Transverse colon (tissue), 4 donors: ENCODE measurements at regions of chr12 and their contacts with region 1.

Region 1: DNA sequence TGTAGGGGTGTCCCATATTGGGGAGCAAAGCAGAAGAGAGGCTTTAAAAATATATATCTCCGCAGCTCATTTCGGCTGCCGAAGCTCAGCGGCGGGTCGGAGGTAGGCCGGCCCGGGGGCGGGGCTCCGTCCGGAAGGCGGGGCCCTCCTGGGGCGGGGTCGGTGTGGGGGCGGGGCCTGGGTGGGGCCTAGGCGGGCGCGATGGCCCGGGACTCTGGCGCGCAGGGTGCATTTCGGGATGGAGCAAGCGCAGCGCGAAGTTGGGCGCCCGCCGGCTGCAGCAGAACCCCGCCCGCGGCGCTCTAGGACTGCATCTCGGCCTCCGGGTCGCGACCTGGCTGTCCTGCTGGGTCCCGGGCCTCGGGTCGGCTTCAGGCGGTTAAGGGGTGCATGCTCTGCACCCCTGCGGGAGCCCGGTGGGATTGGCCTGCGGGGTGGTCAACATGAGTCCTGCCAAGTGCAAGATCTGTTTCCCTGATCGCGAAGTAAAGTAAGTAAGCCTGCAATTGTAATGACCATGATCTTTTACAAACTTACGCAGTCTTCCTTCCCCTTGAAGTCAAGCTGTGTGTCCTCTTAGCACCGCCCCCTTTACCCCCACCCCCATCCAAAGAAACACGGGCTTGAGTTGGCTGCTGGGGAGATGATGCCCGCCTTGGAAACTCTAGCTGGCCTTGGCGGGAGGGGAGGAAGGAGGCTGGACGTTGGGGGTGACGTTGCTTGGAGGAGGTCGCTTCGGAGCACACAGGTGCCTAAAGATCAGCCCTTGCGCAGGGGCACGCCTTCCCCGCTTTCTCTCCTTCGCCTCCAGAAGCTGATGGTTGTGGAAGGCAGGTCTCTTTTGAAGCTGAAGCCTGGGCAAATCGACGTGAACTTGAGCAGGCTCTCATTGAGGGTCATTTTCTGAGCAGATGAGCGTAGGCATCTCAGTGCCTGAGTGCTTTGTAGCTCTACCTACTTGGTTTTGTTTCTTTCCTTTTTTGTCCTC is 38.4 kb downstream of the ACACB start:
- DNase-seq: peak; percentile 87
- H3K4me3 ChIP-seq: peak overlapping the region; percentile 43 to 74 (median 61)
- H3K27ac ChIP-seq: peak overlapping the region; percentile 78 to 97 (median 94)
- H3K4me1 ChIP-seq: peaks cover 13 to 44% (median 20%) of the 10 kb centered on the region in 4 donors
- H3K27me3 ChIP-seq: no peaks in the 10 kb centered on the region
- CTCF ChIP-seq: no peak
- EP300 ChIP-seq: no peak
- POLR2A ChIP-seq: peak; percentile 67

Region 2: DNA sequence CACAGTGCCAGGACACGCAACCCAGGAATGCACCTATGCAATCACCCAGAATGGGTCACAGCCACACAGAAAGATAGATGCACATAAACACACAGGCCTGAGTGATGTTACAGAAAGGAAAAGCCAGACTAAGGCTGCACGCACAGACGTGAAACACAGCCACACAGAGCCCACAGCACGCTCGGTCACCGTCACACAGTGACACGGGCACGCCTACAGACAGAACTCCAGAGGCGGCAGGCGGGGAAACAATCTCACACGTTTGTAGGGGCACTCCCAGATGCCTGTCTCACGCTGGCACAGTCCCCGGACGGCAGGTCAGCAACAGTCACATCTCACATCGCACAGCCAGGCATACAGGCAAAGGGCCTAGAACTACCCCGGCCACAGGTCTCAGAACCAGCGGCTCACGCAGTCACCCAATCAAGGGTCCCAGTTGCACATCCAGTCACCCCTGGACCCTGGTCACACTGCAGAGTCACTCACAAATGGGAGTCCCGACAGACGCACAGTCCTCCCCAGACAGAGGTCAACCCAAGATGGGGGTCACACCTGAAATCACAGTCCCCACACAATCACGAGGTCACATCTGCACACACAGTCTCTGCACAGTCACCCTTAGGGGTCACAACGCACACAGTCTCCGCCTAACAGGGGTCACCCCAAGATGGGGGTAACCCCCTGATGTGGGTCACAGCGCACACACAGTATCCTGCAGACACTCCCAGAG is 298.2 kb before region 1 on chr12:
- in situ Hi-C with region 1: no loop called
- intact Hi-C with region 1: loop called (anchors 5 kb)
- DNase-seq: peak; percentile 81
- H3K4me3 ChIP-seq: peak overlapping the region; percentile 62 to 85 (median 68)
- H3K27ac ChIP-seq: peak overlapping the region; percentile 87 to 94 (median 93)
- H3K4me1 ChIP-seq: peaks cover 8 to 64% (median 42%) of the 10 kb centered on the region in 4 donors
- H3K27me3 ChIP-seq: no peaks in the 10 kb centered on the region
- CTCF ChIP-seq: peak in 1 of 5 experiments; percentile 10
- EP300 ChIP-seq: no peak
- POLR2A ChIP-seq: peak; percentile 74

Region 3: DNA sequence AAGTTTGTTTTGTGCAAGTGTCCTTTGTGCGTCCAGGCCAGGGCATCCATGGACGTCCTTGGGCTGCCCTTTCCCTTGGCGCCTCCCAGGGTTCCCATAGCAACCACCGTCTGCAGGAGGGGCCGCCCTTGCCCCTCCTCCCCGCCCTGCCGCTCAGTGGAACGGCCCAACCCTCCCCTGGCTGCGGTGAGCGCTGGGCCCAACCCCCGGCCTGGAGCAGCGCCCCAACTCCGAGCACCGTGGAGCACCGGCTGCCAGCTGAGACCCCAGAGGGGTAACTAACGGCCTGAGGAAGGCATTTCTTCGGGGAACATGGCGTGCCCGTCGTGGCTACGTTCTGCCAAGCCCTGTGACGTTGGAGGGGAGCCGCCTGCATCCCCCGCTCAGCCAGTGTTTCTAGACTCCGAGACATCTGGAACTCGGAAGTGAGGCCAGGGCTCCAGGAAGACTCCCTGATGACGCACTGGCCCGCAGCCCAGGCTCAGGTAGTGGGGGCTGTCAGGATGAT is 43.7 kb before region 1 on chr12:
- in situ Hi-C with region 1: no loop called
- intact Hi-C with region 1: loop called (anchors 1 kb)
- DNase-seq: peak; percentile 93
- H3K4me3 ChIP-seq: peak overlapping the region; percentile 46 to 64 (median 56)
- H3K27ac ChIP-seq: peak overlapping the region; percentile 93 to 98 (median 95)
- H3K4me1 ChIP-seq: peaks cover 11 to 49% (median 48%) of the 10 kb centered on the region in 4 donors
- H3K27me3 ChIP-seq: no peaks in the 10 kb centered on the region
- CTCF ChIP-seq: no peak
- EP300 ChIP-seq: peak; percentile 94
- POLR2A ChIP-seq: peak; percentile 93